ENCODE measurements at regions of chr1 and their contacts with region 1.

Region 1: GRCh38 chr1:176374967-176375569 is 87.9 kb upstream of the PAPPA2 start:
- DNase-seq: peak; percentile 81
- ATAC-seq: peak; percentile 56
- H3K4me3 Mint-ChIP-seq: no peak overlapping the region
- H3K27ac Mint-ChIP-seq: no peak overlapping the region
- H3K4me1 Mint-ChIP-seq: no peaks in the 10 kb centered on the region
- H3K27me3 Mint-ChIP-seq: peaks cover 14% of the 10 kb centered on the region
- CTCF ChIP-seq: peak; percentile 73

Region 2: GRCh38 chr1:176330782-176331181 is 44.3 kb before region 1 on chr1:
- CTCF ChIA-PET with region 1: no interaction called
- POLR2A ChIA-PET with region 1: no interaction called
- intact Hi-C with region 1: no loop called
- DNase-seq: no peak
- ATAC-seq: no peak
- H3K4me3 Mint-ChIP-seq: no peak overlapping the region
- H3K27ac Mint-ChIP-seq: no peak overlapping the region
- H3K4me1 Mint-ChIP-seq: no peaks in the 10 kb centered on the region
- H3K27me3 Mint-ChIP-seq: peaks cover 1% of the 10 kb centered on the region
- CTCF ChIP-seq: no peak

Region 3: GRCh38 chr1:176444286-176444685 is 69.2 kb after region 1 on chr1:
- CTCF ChIA-PET with region 1: no interaction called
- POLR2A ChIA-PET with region 1: no interaction called
- intact Hi-C with region 1: loop called (anchors 10 kb)
- DNase-seq: no peak
- ATAC-seq: no peak
- H3K4me3 Mint-ChIP-seq: no peak overlapping the region
- H3K27ac Mint-ChIP-seq: no peak overlapping the region
- H3K4me1 Mint-ChIP-seq: no peaks in the 10 kb centered on the region
- H3K27me3 Mint-ChIP-seq: peaks cover 5% of the 10 kb centered on the region
- CTCF ChIP-seq: no peak

Region 4: DNA sequence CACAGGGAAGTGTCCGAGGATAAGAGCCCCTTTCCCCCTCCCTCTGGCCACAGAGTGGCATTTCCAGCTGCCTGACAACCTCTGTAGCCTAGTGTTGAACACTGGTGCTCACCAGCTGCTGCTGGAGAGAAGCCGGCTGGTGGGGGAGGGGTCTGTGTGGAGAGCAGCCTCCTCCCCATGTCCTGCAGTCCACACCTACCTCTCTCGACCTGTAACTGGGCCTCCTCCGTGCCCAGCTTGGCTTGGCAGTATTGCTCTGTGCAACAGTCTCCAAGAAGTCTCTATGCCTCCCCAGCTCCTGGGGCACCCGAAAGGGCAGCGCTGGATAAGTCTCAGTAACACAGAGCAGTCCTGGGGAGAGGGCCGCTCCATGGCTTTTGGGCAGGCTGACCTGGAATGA is 104.9 kb after region 1 on chr1:
- CTCF ChIA-PET with region 1: no interaction called
- POLR2A ChIA-PET with region 1: no interaction called
- intact Hi-C with region 1: no loop called
- DNase-seq: no peak
- ATAC-seq: no peak
- H3K4me3 Mint-ChIP-seq: no peak overlapping the region
- H3K27ac Mint-ChIP-seq: no peak overlapping the region
- H3K4me1 Mint-ChIP-seq: no peaks in the 10 kb centered on the region
- H3K27me3 Mint-ChIP-seq: peaks cover 6% of the 10 kb centered on the region
- CTCF ChIP-seq: no peak

Region 5: GRCh38 chr1:176880954-176881595 is 506.0 kb after region 1 on chr1:
- CTCF ChIA-PET with region 1: interaction called, 6 read pairs
- POLR2A ChIA-PET with region 1: no interaction called
- intact Hi-C with region 1: loop called (anchors 5 kb)
- DNase-seq: peak; percentile 66
- ATAC-seq: no peak
- H3K4me3 Mint-ChIP-seq: no peak overlapping the region
- H3K27ac Mint-ChIP-seq: no peak overlapping the region
- H3K4me1 Mint-ChIP-seq: no peaks in the 10 kb centered on the region
- H3K27me3 Mint-ChIP-seq: peaks cover 3% of the 10 kb centered on the region
- CTCF ChIP-seq: peak; percentile 72